Ovary (tissue), 10 donors: ENCODE measurements at regions of chr2 and their contacts with region 1.

Region 1: GRCh38 chr2:16756831-16757644 is 91.4 kb upstream of the CYRIA start:
- DNase-seq: peak; percentile 81 to 91 (median 86)
- H3K4me3 ChIP-seq: no peak overlapping the region
- H3K27ac ChIP-seq: peak overlapping the region in 1 of 2 donors; percentile 76
- H3K4me1 ChIP-seq: peaks cover 14% of the 10 kb centered on the region
- H3K27me3 ChIP-seq: no peaks in the 10 kb centered on the region
- CTCF ChIP-seq: peak; percentile 92 to 93 (median 93)
- EP300 ChIP-seq: no peak
- POLR2A ChIP-seq: no peak

Region 2: GRCh38 chr2:15939854-15940660 is 817.0 kb before region 1 on chr2 and contains the start of gene MYCN:
- intact Hi-C with region 1: loop called in 2 of 4 experiments (anchors 5 to 10 kb)
- DNase-seq: peak; percentile 52 to 72 (median 56)
- H3K4me3 ChIP-seq: peak within 1 kb of the TSS; percentile 44
- H3K27ac ChIP-seq: no peak within 1 kb of the TSS
- H3K4me1 ChIP-seq: no peaks in the 10 kb centered on the region
- H3K27me3 ChIP-seq: no peaks in the 10 kb centered on the region
- CTCF ChIP-seq: peak in 1 of 3 donors; percentile 27
- EP300 ChIP-seq: no peak
- POLR2A ChIP-seq: no peak
- total RNA-seq, gene MYCN: 1.2 to 7.0 (median 2.1) TPM

Region 3: DNA sequence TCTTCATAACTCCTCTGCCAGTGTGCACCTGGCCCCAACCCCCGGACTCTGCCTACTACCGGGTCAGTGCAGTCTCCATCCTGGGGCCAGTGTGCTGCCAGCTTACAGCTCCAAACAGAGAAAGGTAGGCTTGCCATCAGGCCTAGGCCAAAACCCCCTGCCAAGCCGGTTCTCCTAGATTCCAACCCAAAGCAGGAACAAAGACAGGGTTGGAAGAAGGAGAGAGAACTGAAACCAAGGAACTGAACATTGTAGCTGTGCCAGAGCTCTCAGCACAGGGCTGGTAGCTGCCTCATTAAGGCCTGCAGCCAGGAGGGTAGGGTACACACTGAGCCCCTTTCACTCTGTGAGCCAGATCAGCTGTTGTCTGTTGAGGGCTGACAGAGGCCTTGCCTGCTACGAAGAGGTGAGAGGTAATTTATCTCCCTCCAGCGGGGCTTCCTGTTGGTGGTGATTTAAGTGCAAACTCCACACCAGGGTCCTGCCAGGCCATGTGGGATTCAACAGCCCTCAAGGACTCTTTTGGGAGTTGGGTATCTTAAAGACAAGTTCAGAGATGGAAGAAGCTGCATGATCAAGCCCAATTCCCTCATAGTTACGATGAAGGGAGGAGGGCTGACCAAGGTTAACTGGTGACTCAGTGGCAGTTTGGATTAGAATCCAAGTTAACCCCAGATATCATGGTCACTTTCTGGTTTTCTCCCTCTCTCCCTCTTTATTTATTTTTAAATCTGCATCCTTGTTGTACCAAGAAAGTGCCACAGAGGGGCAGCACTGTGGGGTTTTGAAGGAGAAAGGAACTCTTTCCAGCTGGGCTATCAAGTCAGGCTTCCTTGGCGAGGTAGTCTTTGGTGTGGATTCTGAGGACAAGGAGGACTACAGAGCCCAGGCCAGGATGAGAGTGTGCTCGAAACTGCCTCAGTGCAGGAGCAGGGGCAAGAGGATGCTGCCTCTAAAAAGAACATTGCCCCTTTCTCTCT is 139.5 kb before region 1 on chr2:
- intact Hi-C with region 1: loop called (anchors 5 kb)
- DNase-seq: peak in 1 of 5 donors; percentile 44
- H3K4me3 ChIP-seq: no peak overlapping the region
- H3K27ac ChIP-seq: no peak overlapping the region
- H3K4me1 ChIP-seq: peaks cover 8% of the 10 kb centered on the region
- H3K27me3 ChIP-seq: no peaks in the 10 kb centered on the region
- CTCF ChIP-seq: peak in 1 of 3 donors; percentile 27
- EP300 ChIP-seq: no peak
- POLR2A ChIP-seq: no peak

Region 4: DNA sequence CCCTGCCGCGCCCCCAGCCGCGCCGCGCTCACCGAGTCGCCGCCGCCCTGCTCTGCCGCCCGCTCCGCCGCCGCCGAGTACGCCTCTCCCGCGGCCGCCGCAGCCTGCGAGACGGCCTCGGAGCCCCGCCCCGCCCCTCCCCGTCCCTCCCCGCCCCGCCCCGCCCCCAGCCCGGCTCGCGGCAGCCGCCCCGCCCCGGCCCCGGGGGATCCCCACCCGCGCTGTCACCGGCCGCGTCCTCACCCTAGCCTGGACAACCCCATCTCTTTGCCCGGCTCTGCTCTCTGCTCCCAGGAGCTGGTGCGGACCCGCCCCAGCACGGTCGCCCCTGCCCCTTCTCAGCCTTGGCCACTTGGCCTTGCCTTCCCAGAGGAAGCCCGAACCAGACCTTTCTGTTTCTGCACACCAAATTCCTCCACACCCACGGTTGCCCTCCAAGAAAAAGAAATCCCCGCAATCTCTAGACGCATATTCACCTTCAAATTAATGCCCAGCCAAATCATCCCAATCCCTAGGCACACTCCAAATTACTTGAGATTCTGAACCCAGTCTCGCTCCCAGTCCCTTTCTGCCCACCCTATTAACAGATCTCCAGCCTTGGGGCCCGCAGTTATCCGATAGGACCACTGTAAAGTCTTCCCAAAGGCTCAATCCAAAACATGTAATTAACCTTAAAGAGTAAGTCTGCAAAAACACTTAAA is 91.1 kb before region 1 on chr2 and contains the start of gene CYRIA:
- intact Hi-C with region 1: loop called in 1 of 4 experiments (anchors 10 kb)
- DNase-seq: peak; percentile 56 to 77 (median 70)
- H3K4me3 ChIP-seq: peak within 1 kb of the TSS; percentile 89
- H3K27ac ChIP-seq: no peak within 1 kb of the TSS
- H3K4me1 ChIP-seq: peaks cover 8% of the 10 kb centered on the region
- H3K27me3 ChIP-seq: no peaks in the 10 kb centered on the region
- CTCF ChIP-seq: no peak
- EP300 ChIP-seq: no peak
- POLR2A ChIP-seq: no peak
- total RNA-seq, gene CYRIA: 9.7 to 21.3 (median 13.2) TPM